Left lung (tissue), 14 donors: ENCODE measurements at regions of chr6 and their contacts with region 1.

Region 1: DNA sequence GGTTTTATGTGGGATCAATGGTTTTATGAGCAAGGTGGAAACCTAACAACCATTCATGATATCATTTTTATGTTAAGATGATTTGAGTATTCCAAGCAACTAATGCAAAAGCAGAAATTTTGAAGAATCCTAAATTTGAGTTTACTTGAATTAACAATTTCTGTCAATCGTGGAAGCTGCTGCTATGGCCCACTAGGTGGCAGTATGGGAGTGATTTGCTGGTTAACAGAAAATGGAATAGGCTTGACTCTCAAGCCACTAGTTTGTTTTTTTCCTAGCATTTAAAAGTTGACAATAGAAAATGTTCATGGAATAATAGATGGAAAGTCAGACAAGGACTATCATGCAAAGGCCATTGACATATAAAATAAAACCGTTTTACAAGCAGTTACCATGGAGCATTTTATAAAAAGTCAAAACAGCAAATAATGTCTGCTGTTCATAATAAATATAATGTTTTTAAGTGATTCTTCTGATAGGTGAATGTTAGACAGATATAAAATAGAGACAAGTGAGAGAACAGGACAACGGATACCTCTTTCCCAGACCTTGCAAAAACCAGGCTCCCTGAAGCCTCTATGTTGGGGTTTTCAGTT is 43.0 kb upstream of the TMEM200A start:
- DNase-seq: peak in 2 of 4 donors; percentile 40 to 68
- ATAC-seq: peak; percentile 83
- H3K4me3 ChIP-seq: no peak overlapping the region
- H3K27ac ChIP-seq: no peak overlapping the region
- H3K4me1 ChIP-seq: peaks cover 0 to 5% of the 10 kb centered on the region in 2 donors
- H3K27me3 ChIP-seq: no peaks in the 10 kb centered on the region
- CTCF ChIP-seq: peak; percentile 67 to 83

Region 2: DNA sequence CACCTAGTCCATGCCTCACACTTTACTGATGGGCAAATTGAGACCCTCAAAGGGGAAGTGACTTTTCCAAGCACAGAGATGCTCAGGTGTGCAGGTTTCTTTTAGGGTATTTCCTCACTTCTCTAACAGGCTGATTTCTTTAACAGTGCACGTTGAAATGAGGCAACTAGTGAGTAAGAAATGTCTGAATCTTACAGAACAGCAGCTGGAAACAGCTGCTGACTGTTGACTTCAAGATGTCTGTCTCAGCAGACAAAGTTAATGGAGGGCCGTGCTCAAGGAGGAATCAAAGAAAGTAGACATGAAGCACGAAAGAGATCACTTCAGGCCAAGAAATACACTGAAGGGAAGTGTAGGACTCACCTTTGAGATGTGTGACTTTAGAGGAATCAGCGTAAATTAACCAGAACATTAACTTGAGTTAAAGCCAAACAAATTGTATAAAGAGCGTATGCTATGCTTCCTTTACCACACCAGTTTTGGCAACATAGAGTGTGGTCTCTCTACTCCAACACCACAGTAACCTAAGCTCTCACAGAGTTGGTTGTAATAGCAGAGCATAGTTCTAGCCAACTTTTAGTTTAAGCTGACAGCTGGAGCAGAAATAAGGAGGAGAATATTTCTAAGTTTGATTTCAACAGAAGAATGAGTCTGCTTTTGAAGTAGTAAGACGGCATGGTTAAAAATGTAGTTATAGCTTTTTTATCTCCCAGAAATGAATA is 160.9 kb before region 1 on chr6:
- intact Hi-C with region 1: no loop called
- DNase-seq: peak in 2 of 4 donors; percentile 88 to 94
- ATAC-seq: peak; percentile 48
- H3K4me3 ChIP-seq: no peak overlapping the region
- H3K27ac ChIP-seq: peak overlapping the region in 1 of 2 donors; percentile 49
- H3K4me1 ChIP-seq: no peaks in the 10 kb centered on the region
- H3K27me3 ChIP-seq: no peaks in the 10 kb centered on the region
- CTCF ChIP-seq: no peak

Region 3: GRCh38 chr6:130708338-130708737 is 385.6 kb after region 1 on chr6:
- intact Hi-C with region 1: loop called in 1 of 2 experiments (anchors 10 kb)
- DNase-seq: no peak
- ATAC-seq: no peak
- H3K4me3 ChIP-seq: no peak overlapping the region
- H3K27ac ChIP-seq: no peak overlapping the region
- H3K4me1 ChIP-seq: no peaks in the 10 kb centered on the region
- H3K27me3 ChIP-seq: no peaks in the 10 kb centered on the region
- CTCF ChIP-seq: no peak

Region 4: DNA sequence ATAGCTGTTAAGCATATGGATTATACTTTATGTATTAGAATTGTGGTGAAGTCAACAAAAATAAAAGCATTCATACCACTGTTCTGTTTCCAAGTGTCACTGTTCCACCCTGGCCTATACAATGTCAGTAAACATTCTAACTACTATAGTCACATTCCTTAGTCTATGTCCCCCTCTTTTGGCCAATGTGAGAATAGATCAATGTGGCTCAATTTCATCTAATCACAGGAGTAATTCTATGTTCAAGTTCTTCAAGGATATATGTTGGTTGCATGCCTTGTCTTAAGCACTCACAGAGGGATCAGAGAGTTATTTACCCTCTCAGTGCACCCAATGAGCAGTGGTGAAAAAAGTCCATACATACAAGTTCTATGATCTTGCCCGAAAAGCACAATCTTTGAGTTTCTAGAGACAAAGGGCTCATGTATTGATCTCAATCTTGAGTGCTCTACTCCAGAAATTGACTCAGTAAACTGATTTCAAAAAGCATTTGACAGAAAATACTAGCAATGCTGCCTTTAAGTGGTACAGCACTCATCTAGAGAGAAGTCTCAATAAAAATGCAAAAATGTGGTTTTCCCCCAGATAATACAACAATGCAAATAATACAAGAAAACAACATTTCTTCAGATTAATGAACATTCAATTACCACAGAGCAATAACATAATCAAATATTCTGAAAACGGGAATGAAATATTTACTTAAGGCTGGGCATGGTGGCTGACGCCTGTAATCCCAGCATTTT is 521.0 kb after region 1 on chr6:
- intact Hi-C with region 1: loop called in 1 of 2 experiments (anchors 10 kb)
- DNase-seq: peak in 1 of 4 donors; percentile 32
- ATAC-seq: peak; percentile 75
- H3K4me3 ChIP-seq: no peak overlapping the region
- H3K27ac ChIP-seq: no peak overlapping the region
- H3K4me1 ChIP-seq: no peaks in the 10 kb centered on the region
- H3K27me3 ChIP-seq: no peaks in the 10 kb centered on the region
- CTCF ChIP-seq: no peak